Right ventricle myocardium superior (tissue), 1 donor: ENCODE measurements at regions of chr6 and their contacts with region 1.

Region 1: GRCh38 chr6:169969372-169970099 is 218.1 kb downstream of the ERMARD start:
- DNase-seq: no peak
- ATAC-seq: peak; percentile 37

Region 2: GRCh38 chr6:168908887-168909286 is 1060.6 kb before region 1 on chr6:
- intact Hi-C with region 1: no loop called
- DNase-seq: no peak
- ATAC-seq: no peak

Region 3: GRCh38 chr6:170295510-170296422 is 326.2 kb after region 1 on chr6:
- intact Hi-C with region 1: loop called (anchors 5 kb)
- DNase-seq: peak; percentile 59
- ATAC-seq: peak; percentile 32

Region 4: DNA sequence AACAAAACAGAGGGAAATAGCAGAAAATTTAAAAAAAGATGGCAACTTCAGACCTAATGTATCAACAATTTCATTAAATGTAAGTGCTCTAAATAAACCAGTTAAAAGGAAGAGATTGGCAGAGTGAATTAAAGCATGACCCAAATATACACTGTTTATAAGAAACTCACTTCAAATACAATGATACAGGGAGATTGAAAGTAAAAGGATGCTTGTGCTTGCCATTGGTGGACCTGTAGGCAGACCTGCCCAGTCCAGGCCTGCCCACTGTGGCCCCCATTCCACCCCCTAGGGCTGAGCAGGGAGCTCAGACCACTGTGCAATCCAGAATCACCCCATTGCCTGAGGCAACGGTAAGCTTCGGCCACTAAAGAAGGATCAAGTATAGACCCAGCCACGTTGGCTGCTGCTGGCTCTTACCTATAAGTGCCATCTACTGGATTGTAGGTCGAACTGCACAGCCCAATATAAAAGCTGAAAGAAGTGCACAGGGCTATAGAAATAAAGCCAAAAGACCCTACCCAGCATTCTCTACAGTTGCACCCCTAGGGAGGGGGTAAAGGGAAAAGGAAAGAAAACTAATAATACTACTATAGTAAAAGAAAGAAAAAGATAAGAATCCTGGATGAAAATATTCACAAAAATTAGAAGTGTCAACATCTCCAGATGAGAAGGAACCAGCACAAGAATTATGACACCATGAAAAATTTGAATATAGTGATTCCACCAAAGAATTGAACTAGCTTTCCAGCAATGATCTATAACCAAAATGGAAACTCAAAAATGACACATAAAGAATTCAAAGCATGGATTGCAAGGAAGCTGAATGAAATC is 547.5 kb after region 1 on chr6:
- intact Hi-C with region 1: loop called (anchors 5 kb)
- DNase-seq: peak; percentile 45
- ATAC-seq: peak; percentile 67